ENCODE measurements at regions of chr12 and their contacts with region 1.

Region 1: DNA sequence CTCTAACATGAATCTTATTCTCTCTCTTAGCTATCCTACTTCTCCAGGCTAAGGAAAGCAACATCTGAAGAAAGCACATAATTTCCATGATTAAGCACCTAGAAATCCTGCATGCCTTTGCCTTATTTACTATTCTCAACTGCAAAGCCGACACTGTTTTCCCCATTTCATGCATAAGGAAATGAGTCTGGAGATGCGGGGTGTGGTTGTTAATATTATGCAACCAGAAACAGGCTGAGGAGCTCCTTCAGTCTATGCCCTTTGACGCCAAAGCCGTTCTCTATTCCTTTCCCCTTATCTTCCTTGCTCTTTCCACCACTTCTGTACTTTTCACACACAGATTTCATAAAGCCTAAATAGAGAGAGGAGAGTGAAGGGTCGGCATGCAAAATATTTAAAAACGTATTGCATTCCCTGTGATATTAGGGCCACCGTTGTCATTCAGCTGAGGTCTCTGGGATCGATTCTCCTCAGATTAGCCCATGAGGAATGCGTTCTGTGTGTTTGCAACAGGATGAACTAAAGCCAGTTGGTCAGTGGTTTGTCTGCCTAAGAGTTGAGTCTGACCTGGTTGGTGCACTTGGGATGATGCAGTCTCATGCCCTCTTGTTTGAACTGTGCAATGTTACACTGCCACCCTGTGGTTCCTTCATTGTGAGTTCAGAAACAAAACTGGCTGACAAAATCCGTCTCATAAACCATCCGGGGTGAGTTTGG is 53.1 kb upstream of the PLEKHG7 start:
- DNase-seq: peak; percentile 72 to 93
- ATAC-seq: peak; percentile 99
- H3K4me3 ChIP-seq: no peak overlapping the region
- H3K27ac ChIP-seq: peak overlapping the region; percentile 79 to 83
- H3K4me1 ChIP-seq: peaks cover 18% of the 10 kb centered on the region
- CTCF ChIP-seq: peak; percentile 92
- EP300 ChIP-seq: no peak
- POLR2A ChIP-seq: no peak
- RAD21 ChIP-seq: peak; percentile 97

Region 2: DNA sequence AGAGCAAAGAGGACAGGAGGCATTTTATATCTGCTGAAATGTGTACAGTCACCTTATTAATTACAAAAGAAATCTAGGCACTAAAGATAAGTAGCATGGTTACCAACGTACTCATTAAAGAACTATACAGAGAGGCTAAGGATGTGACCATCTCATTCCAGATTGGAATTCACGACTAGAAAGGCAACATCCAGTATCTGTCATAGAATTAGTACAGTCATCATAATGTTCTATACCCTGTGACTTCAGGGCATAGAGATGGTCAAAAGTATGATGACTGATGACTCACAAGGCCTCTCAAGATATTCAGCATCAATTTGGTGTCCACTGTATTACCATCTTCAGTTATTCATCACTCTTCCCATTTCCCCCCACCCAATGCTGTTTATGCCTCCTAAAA is 90.9 kb before region 1 on chr12:
- CTCF ChIA-PET with region 1: no interaction called
- POLR2A ChIA-PET with region 1: no interaction called
- DNase-seq: no peak
- ATAC-seq: peak; percentile 75 to 76; a peak in 5 of 6 replicates
- H3K4me3 ChIP-seq: no peak overlapping the region
- H3K27ac ChIP-seq: peak overlapping the region; percentile 70 to 84
- H3K4me1 ChIP-seq: peaks cover 31% of the 10 kb centered on the region
- CTCF ChIP-seq: no peak
- EP300 ChIP-seq: no peak
- POLR2A ChIP-seq: no peak
- RAD21 ChIP-seq: no peak

Region 3: GRCh38 chr12:92570056-92570753 is 79.5 kb before region 1 on chr12:
- CTCF ChIA-PET with region 1: interaction called, 16 read pairs
- POLR2A ChIA-PET with region 1: no interaction called
- DNase-seq: peak; percentile 57 to 88
- ATAC-seq: peak; percentile 78 to 91
- H3K4me3 ChIP-seq: no peak overlapping the region
- H3K27ac ChIP-seq: peak overlapping the region; percentile 49 to 66
- H3K4me1 ChIP-seq: peaks cover 17% of the 10 kb centered on the region
- CTCF ChIP-seq: peak; percentile 97
- EP300 ChIP-seq: no peak
- POLR2A ChIP-seq: no peak
- RAD21 ChIP-seq: peak; percentile 94 to 97

Region 4: DNA sequence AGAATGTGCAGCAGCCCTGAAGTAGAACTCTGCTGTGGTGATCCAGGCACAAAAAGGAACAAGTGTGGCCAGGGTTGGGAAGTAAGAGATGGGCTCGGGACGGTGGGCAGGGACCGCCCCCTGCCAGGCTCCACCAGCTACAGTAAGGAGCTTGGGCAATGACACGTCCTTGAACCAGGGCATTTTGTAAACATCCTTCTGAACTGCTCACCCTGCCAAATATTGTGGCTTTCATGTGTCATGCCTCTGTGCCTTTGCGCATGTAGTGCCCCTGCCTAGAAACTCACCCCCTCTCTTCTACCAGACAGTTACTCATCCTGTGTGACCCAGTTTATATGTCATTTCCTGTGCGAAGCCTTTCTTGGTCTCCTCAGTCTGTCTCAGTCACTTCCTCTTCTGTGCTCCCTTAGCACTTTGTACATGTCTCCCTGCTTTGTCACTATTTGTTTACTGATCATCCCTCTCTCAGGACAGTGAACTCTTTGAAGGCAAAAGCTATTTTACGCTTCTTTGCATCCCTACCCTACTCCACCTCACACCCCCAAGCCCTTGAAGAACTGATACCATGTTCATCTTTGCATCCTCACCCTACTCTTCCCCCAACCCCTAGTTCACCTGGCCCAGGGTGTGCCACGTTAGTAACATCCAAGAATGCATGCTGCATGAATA is 55.8 kb before region 1 on chr12:
- CTCF ChIA-PET with region 1: interaction called, 20 read pairs
- POLR2A ChIA-PET with region 1: interaction called, 6 read pairs
- DNase-seq: peak; percentile 88 to 97
- ATAC-seq: peak; percentile 94 to 99
- H3K4me3 ChIP-seq: no peak overlapping the region
- H3K27ac ChIP-seq: peak overlapping the region; percentile 93 to 97
- H3K4me1 ChIP-seq: peaks cover 44% of the 10 kb centered on the region
- CTCF ChIP-seq: no peak
- EP300 ChIP-seq: peak; percentile 99
- POLR2A ChIP-seq: no peak
- RAD21 ChIP-seq: no peak; a peak in 3 of 5 replicates

Region 5: DNA sequence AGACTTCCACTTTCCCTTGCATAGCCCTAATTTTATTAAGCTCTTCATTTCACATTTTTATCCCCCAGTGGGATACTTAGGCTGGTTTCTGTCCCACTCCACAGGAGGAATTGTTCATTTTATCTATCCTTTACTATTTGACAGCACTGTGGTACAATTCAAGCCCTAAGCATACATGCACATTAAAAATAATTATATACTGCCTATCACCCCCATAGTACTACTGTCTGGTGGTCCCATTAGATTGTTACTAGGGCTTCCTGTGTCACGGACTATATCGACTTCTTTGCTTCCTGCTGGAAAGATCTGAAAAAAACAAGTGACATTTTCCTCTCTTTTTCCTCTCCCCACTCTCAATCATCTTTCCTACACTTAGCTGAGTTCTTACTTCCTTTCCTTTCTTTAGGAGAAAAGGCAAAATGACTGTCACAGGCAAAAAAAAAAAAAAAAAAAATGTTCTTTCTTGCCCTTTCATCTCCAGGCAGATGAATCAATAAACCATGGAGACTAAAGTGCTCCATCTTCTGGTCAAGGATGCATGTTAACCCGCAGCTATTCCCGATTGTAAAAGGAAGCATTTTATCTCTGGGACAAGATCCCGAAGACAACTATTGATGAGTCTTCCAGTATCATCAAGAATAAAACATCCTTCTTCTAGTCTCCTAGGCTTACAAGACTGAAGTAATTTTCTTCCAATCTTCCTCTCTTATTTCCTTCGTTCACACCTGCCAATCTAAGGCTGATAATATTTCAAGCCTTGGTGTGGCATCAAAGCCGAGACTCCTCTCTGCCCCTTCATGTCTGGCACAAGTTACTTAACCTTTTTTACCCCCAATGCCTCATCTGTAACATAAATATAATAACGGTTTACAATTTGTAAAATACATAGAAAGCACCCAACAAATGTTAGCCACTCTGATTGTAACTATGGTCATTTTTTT is 41.2 kb before region 1 on chr12:
- CTCF ChIA-PET with region 1: interaction called, 34 read pairs
- POLR2A ChIA-PET with region 1: no interaction called
- DNase-seq: peak; percentile 27 to 76
- ATAC-seq: peak; percentile 54 to 69; a peak in 3 of 6 replicates
- H3K4me3 ChIP-seq: no peak overlapping the region
- H3K27ac ChIP-seq: peak overlapping the region; percentile 78 to 98
- H3K4me1 ChIP-seq: peaks cover 23% of the 10 kb centered on the region
- CTCF ChIP-seq: peak; percentile 67
- EP300 ChIP-seq: no peak
- POLR2A ChIP-seq: no peak
- RAD21 ChIP-seq: peak; percentile 75 to 82

Region 6: GRCh38 chr12:92629349-92630065 is 20.2 kb before region 1 on chr12:
- CTCF ChIA-PET with region 1: interaction called, 17 read pairs
- POLR2A ChIA-PET with region 1: no interaction called
- DNase-seq: no peak
- ATAC-seq: no peak
- H3K4me3 ChIP-seq: no peak overlapping the region
- H3K27ac ChIP-seq: peak overlapping the region in 1 of 2 experiments; percentile 46; a peak in 2 of 6 replicates
- H3K4me1 ChIP-seq: peaks cover 5% of the 10 kb centered on the region
- CTCF ChIP-seq: no peak
- EP300 ChIP-seq: no peak
- POLR2A ChIP-seq: no peak
- RAD21 ChIP-seq: no peak

Region 7: DNA sequence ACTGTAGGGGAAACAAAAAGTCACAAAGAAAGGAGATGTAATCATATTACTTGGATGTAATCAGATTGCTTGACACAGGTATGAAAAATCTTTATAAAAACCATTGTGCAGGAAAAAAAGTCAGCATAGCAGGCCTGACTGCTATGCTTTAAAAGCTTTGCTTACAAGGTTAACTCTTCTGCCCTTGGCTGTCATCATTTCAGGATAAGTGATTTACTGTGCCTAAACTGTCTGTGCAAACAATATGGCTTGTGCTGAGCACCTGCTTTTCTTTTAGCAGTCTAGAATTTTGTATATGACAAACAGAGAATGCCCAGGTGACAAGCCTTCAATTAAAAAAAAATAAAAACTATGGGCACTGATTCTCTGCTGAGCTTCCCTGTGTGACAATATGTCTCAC is 10.7 kb before region 1 on chr12:
- CTCF ChIA-PET with region 1: interaction called, 17 read pairs
- POLR2A ChIA-PET with region 1: interaction called, 3 read pairs
- DNase-seq: no peak
- ATAC-seq: no peak
- H3K4me3 ChIP-seq: no peak overlapping the region
- H3K27ac ChIP-seq: no peak overlapping the region
- H3K4me1 ChIP-seq: no peaks in the 10 kb centered on the region
- CTCF ChIP-seq: no peak
- EP300 ChIP-seq: no peak
- POLR2A ChIP-seq: no peak
- RAD21 ChIP-seq: no peak

Region 8: DNA sequence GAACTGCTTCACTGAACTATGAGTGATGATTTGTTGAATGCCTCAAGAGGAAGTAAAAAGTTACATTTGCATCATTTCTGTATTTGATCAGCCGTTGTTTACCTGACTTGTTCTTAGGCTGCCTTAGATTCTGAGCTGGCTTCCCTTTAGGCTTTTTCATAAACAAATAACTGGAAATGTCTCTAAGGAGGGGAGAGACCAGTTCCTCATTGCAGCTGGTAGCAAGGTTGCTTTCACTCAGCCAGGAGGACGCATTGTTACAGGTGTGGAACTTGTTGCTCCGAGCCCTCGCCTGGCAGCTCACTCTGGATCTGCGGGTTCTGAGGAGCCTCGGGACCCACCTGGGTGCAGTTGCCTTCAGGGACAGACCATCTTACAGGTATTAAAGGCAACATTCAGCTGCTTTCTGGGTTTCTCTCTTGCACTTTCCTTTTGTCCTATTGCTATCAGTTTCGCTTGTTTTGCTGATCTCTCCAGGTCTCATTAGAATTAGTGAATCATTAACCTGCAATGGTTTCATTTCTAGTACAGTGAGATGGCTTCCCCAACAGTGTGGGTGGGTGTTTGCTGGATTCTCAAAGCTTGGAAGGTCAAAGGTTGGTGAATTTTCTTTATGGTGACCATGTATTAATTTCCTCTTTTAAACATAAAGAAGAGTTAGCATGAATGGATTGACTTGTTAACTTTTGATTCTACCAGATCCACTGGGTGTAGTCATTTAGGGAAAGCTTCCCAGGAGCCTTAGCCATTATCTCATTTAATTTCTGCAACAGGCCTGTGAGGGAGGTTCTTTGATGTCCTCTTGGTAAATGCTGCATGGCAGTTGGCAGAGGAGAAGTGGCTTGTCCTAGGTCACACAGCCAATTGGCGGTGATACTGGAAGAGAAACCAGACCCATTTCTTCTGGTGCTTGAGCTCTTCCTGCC is 53.3 kb after region 1 on chr12 and contains the start of gene PLEKHG7:
- CTCF ChIA-PET with region 1: no interaction called
- POLR2A ChIA-PET with region 1: no interaction called
- DNase-seq: peak in 1 of 2 experiments; percentile 9
- ATAC-seq: peak; percentile 39 to 40; a peak in 3 of 6 replicates
- H3K4me3 ChIP-seq: no peak within 1 kb of the TSS
- H3K27ac ChIP-seq: no peak within 1 kb of the TSS
- H3K4me1 ChIP-seq: no peaks in the 10 kb centered on the region
- CTCF ChIP-seq: no peak
- EP300 ChIP-seq: no peak
- POLR2A ChIP-seq: no peak
- RAD21 ChIP-seq: no peak
- polyA plus RNA-seq, gene PLEKHG7: 0.05 and 0.08 TPM in 2 replicates

Region 9: GRCh38 chr12:92717202-92717601 is 67.5 kb after region 1 on chr12:
- CTCF ChIA-PET with region 1: no interaction called
- POLR2A ChIA-PET with region 1: no interaction called
- DNase-seq: no peak
- ATAC-seq: peak in 1 of 2 experiments; percentile 36; a peak in 2 of 6 replicates
- H3K4me3 ChIP-seq: no peak overlapping the region
- H3K27ac ChIP-seq: no peak overlapping the region
- H3K4me1 ChIP-seq: peaks cover 12% of the 10 kb centered on the region; the same call in 1 of the 3 replicates
- CTCF ChIP-seq: 0 out of 3 replicates have a peak, but pooled peaks have one; percentile 14
- EP300 ChIP-seq: no peak
- POLR2A ChIP-seq: no peak
- RAD21 ChIP-seq: peak in 1 of 2 experiments; percentile 52; a peak in 2 of 5 replicates

Region 10: DNA sequence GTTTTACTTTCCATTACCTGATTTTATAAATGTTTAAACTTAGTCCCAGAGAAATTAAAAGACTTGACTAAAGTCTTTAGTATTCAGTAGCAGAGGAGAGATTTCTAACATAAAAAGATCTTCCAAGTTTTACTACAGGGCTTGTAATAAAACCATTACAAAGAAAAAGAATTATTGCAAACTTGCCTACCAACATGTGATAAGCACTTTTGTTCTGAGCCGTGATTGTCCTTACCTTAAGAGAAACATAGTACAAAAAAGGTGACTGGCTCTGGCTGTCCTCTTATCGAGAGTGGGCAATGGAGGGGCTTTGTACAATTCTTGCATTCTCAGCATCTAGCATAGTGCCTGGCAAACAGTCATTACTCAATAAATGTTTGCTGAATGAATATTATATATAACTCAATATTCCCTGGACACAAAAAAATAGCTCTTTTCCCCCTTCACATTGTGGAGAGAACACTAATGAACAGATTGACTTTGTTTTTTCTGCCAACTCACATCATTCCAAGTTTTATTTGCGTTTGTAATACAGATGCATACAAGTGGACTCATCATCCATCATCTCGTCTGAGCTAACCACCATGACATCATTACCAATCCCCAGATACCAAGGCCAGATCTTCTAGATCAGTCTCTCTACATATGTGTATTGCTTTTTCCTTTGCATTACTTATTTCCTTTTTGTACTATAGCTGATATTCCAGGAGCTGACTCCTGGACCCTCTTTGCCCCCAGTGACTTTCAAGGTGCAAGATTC is 472.2 kb after region 1 on chr12:
- CTCF ChIA-PET with region 1: no interaction called
- POLR2A ChIA-PET with region 1: no interaction called
- DNase-seq: peak in 1 of 2 experiments; percentile 26
- ATAC-seq: peak; percentile 47 to 69; a peak in 2 of 6 replicates
- H3K4me3 ChIP-seq: no peak overlapping the region
- H3K27ac ChIP-seq: peak overlapping the region; percentile 51 to 56
- H3K4me1 ChIP-seq: peaks cover 14% of the 10 kb centered on the region; the same call in 2 of the 3 replicates
- CTCF ChIP-seq: no peak
- EP300 ChIP-seq: no peak
- POLR2A ChIP-seq: no peak
- RAD21 ChIP-seq: no peak

Measured in A549 (cell line).